ENCODE measurements at regions of chr20 and their contacts with region 1.

Region 1: DNA sequence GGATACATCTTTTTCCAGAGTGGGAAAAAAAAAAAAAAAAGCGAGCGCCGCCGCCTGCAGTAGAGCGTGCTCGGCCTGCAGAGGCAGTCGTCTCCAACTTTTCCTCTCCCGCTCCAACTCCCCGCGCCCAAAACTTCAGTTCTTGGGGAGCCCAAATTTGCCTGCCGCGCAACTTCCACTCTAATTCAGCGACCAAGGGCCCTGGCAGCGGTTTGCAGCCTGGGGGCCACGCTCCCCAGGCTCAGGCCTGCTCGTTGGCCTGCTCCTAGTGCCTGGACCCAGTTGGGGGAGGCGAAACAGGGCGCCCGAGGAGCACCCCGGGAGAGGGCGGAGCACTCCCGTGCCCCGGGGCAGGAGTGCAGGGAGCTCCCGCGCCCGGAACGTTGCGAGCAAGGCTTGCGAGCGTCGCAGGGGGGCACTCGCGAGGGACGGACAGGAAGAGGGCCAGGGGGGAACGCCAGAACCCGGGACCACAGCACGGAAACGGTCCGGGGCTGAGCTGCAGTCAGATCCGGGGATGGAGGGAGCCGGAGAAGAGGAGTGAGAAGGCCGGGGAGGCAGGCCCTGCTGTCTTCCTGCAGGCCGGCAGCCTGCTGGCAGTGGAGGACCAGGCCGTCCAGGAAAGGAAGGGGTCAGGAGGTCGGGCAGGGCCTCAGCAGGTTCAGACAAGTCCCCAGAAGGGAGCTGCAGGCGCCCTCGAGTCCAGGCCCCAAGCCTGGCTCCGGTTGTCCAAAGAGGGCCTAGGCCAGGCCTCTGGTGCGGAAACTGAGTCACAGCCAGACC is at the start of gene STX16:
- DNase-seq: peak; percentile 87
- H3K4me3 ChIP-seq: peak within 1 kb of the TSS; percentile 86 to 93 (median 89)
- H3K27ac ChIP-seq: peak within 1 kb of the TSS; percentile 81
- H3K4me1 ChIP-seq: peaks cover 31% of the 10 kb centered on the region
- H3K27me3 ChIP-seq: no peaks in the 10 kb centered on the region
- CTCF ChIP-seq: peak; percentile 46 to 65
- POLR2A ChIP-seq: peak; percentile 68
- total RNA-seq, gene STX16: 58.5 and 63.5 TPM in 2 replicates

Region 2: GRCh38 chr20:57938158-57939108 is 712.5 kb before region 1 on chr20:
- CTCF ChIA-PET with region 1: no interaction called
- POLR2A ChIA-PET with region 1: no interaction called
- dilution Hi-C with region 1: no loop called
- intact Hi-C with region 1: no loop called
- DNase-seq: peak; percentile 25
- H3K4me3 ChIP-seq: no peak overlapping the region
- H3K27ac ChIP-seq: no peak overlapping the region
- H3K4me1 ChIP-seq: no peaks in the 10 kb centered on the region
- H3K27me3 ChIP-seq: no peaks in the 10 kb centered on the region
- CTCF ChIP-seq: no peak
- POLR2A ChIP-seq: no peak

Region 3: DNA sequence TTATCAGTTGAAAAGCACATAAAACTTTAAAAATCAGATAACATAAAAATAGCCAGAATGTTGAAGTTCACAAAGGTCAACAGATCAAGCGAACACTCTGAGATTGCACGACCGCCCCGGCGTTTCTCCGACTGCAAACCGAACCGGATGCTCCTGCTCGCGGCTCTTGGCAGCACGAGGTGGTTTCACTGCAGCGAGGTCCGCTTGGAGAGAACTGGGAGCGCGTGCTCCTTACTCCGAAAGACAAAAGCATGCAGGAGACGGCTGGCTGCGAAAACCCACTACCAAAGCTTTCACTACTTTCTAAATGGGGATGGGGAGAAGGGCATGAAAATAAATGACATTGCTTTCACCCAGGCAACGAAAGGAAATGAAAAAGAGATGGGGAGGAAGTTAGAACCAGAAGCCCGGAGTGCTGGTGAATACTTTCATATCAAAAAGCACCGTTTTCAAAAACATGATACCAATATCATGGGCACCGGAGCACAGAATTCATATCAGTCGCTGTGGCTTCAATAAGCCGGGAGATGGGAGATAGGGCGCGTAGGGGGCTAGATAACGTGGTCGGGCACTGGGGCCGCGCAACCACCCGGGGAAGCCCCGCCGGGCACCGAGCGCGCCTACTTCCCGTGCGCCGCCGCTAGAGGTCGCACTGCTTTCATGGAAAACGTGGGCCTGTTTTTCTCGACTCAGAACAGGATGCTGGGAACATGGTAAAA is 414.2 kb before region 1 on chr20:
- CTCF ChIA-PET with region 1: interaction called, 3 read pairs
- POLR2A ChIA-PET with region 1: no interaction called
- dilution Hi-C with region 1: loop called (anchors 25 kb)
- intact Hi-C with region 1: loop called (anchors 2 kb)
- DNase-seq: peak; percentile 66
- H3K4me3 ChIP-seq: peak overlapping the region; percentile 39 to 84 (median 83)
- H3K27ac ChIP-seq: peak overlapping the region; percentile 28
- H3K4me1 ChIP-seq: peaks cover 13% of the 10 kb centered on the region
- H3K27me3 ChIP-seq: no peaks in the 10 kb centered on the region
- CTCF ChIP-seq: peak; percentile 94 to 98
- POLR2A ChIP-seq: peak; percentile 16

Region 4: GRCh38 chr20:58550275-58551060 is 100.5 kb before region 1 on chr20:
- CTCF ChIA-PET with region 1: interaction called, 9 read pairs
- POLR2A ChIA-PET with region 1: no interaction called
- dilution Hi-C with region 1: no loop called
- intact Hi-C with region 1: loop called (anchors 5 kb)
- DNase-seq: peak; percentile 86
- H3K4me3 ChIP-seq: no peak overlapping the region
- H3K27ac ChIP-seq: peak overlapping the region; percentile 2
- H3K4me1 ChIP-seq: peaks cover 39% of the 10 kb centered on the region
- H3K27me3 ChIP-seq: no peaks in the 10 kb centered on the region
- CTCF ChIP-seq: no peak
- POLR2A ChIP-seq: no peak

Region 5: GRCh38 chr20:58630063-58630462 is 20.9 kb before region 1 on chr20:
- CTCF ChIA-PET with region 1: interaction called, 11 read pairs
- POLR2A ChIA-PET with region 1: no interaction called
- dilution Hi-C with region 1: no loop called
- intact Hi-C with region 1: no loop called
- DNase-seq: peak; percentile 61
- H3K4me3 ChIP-seq: no peak overlapping the region
- H3K27ac ChIP-seq: peak overlapping the region; percentile 67
- H3K4me1 ChIP-seq: peaks cover 34% of the 10 kb centered on the region
- H3K27me3 ChIP-seq: no peaks in the 10 kb centered on the region
- CTCF ChIP-seq: no peak
- POLR2A ChIP-seq: no peak

Region 6: DNA sequence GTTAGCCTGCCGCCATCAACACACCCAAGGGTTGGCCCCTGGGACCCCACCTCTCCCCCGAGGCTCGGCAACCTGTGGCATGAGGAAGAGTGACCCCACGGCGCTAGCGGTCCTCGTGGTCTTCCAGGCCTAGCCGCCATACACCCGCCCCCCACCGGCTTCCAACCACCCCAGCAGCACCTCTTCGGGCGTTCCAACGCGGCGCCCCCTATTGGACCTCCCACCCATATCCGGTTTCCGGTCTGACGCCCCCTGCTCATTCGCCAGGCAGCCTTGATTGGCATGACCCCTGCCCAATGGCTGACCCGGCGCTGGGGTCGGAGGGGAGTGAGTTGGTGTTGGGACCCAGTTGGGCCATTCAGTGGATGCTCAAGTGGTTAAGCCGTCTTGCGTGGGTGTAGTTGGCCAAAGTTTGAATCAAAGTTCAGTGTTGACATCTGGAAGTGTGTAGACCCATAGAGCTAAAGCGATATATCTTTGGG is 199.8 kb after region 1 on chr20 and contains the start of gene GNAS-AS1:
- CTCF ChIA-PET with region 1: interaction called, 3 read pairs
- POLR2A ChIA-PET with region 1: no interaction called
- dilution Hi-C with region 1: no loop called
- intact Hi-C with region 1: loop called (anchors 10 kb)
- DNase-seq: no peak
- H3K4me3 ChIP-seq: no peak within 1 kb of the TSS
- H3K27ac ChIP-seq: no peak within 1 kb of the TSS
- H3K4me1 ChIP-seq: no peaks in the 10 kb centered on the region
- H3K27me3 ChIP-seq: peaks cover 44 to 46% of the 10 kb centered on the region in 2 experiments
- CTCF ChIP-seq: no peak
- POLR2A ChIP-seq: no peak
- total RNA-seq, gene GNAS-AS1: 0.58 and 0.74 TPM in 2 replicates

Region 7: DNA sequence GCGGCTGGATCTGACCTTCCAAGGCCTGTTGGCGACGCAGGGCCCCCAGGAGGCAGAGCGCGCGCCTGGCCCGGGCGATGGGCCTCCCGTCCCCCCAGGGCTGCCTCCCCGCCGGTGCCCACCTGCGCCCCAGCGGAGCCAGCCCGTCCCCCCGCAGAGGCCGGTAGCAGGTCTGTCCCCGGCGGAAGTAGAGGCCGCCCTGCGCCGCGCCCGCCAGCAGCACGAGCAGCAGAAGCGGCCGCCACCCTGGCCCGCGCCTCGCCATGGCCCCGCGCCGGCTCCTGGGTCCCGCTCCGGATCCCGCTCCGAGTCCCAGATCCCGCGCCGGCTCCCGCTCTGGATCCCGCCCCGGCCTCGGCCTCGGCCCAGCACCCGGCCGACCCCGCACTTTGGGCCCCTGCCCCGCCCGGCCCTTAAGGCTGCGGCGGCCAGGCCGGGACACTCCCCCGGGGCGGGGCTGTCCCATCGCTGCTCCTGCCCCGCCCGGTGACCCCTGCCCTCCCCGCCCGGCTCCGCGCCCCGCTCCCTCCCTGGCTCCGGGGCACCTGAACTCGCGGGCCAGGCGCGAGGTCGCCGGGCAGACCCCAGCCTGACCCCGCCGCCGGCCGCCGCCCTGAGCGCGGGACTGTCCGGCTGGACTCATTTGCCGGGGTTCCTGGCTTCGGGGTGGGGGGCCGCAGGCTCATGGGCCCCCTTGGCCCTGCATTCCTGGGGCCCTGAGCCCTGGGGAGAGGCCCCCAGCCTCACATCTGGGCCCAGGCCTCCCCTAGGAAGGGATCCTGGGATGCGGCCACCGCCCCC is 356.1 kb after region 1 on chr20 and contains the start of gene CTSZ:
- CTCF ChIA-PET with region 1: interaction called, 3 read pairs
- POLR2A ChIA-PET with region 1: no interaction called
- dilution Hi-C with region 1: no loop called
- intact Hi-C with region 1: loop called (anchors 10 kb)
- DNase-seq: peak; percentile 34
- H3K4me3 ChIP-seq: peak within 1 kb of the TSS; percentile 64 to 74 (median 68)
- H3K27ac ChIP-seq: peak within 1 kb of the TSS; percentile 89
- H3K4me1 ChIP-seq: peaks cover 41% of the 10 kb centered on the region
- H3K27me3 ChIP-seq: no peaks in the 10 kb centered on the region
- CTCF ChIP-seq: no peak
- POLR2A ChIP-seq: peak; percentile 81
- total RNA-seq, gene CTSZ: 299 and 304 TPM in 2 replicates

Measured in endothelial cell of umbilical vein (primary cell).